ENCODE measurements at regions of chr5 and their contacts with region 1.

Region 1: GRCh38 chr5:151115274-151115905 is 34.6 kb upstream of the TNIP1 start:
- DNase-seq: peak; percentile 65 to 85
- ATAC-seq: peak; percentile 82 to 91
- H3K4me3 ChIP-seq: no peak overlapping the region
- H3K27ac ChIP-seq: no peak overlapping the region
- H3K4me1 ChIP-seq: no peaks in the 10 kb centered on the region
- CTCF ChIP-seq: peak; percentile 95
- EP300 ChIP-seq: no peak
- POLR2A ChIP-seq: no peak
- RAD21 ChIP-seq: peak; percentile 98 to 99

Region 2: GRCh38 chr5:150801117-150801927 is 314.1 kb before region 1 on chr5:
- CTCF ChIA-PET with region 1: interaction called, 19 read pairs
- POLR2A ChIA-PET with region 1: no interaction called
- DNase-seq: peak; percentile 59 to 71
- ATAC-seq: peak; percentile 89 to 97
- H3K4me3 ChIP-seq: peak overlapping the region; percentile 29
- H3K27ac ChIP-seq: peak overlapping the region; percentile 12 to 50; a peak in 2 of 6 replicates
- H3K4me1 ChIP-seq: no peaks in the 10 kb centered on the region
- CTCF ChIP-seq: peak; percentile 67
- EP300 ChIP-seq: no peak
- POLR2A ChIP-seq: no peak
- RAD21 ChIP-seq: peak; percentile 58 to 63; a peak in 4 of 5 replicates

Region 3: GRCh38 chr5:151030400-151030799 is 85.0 kb before region 1 on chr5:
- CTCF ChIA-PET with region 1: interaction called, 17 read pairs
- POLR2A ChIA-PET with region 1: no interaction called
- DNase-seq: no peak
- ATAC-seq: no peak
- H3K4me3 ChIP-seq: no peak overlapping the region
- H3K27ac ChIP-seq: no peak overlapping the region
- H3K4me1 ChIP-seq: no peaks in the 10 kb centered on the region
- CTCF ChIP-seq: no peak
- EP300 ChIP-seq: no peak
- POLR2A ChIP-seq: no peak
- RAD21 ChIP-seq: no peak

Region 4: DNA sequence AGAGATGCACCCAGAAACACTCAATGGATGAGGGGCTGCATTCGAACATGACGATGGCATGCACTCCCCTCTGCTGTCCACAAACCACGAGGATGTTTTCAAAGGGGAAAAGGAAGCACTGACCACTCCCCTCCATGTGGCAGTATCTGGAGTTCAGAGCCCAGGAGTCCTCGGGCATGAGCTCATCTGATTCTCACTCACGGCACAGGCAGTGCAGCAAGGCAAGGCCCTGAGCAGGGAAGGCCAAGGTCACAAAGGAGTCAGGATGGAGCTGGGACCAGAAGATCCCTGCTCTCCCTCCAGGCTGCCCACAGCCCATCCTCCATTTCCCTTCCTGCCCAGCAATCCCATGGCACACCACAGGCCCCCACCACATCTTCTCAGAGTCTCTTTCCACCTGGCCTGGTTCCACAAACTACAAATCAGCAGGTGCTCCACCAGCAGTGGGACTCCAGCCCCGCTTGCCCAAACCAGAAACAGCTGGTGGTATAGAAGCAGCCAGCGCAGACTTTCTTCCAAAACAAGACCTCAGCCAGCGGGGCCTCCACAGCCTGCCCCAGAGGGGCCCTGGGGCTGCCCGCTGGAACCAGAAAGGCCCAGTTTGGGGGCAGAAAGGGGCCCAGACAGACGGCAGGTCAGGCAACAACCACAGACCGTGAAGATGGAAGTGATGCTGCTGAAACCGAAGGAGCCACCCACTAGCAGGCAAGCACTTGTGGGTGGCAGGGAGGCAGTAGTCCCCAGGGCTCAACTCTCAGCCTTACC is 46.8 kb before region 1 on chr5:
- CTCF ChIA-PET with region 1: interaction called, 40 read pairs
- POLR2A ChIA-PET with region 1: no interaction called
- DNase-seq: no peak
- ATAC-seq: no peak
- H3K4me3 ChIP-seq: no peak overlapping the region
- H3K27ac ChIP-seq: peak overlapping the region; percentile 19 to 45; a peak in 3 of 6 replicates
- H3K4me1 ChIP-seq: peaks cover 60% of the 10 kb centered on the region
- CTCF ChIP-seq: no peak
- EP300 ChIP-seq: no peak
- POLR2A ChIP-seq: no peak
- RAD21 ChIP-seq: no peak

Region 5: GRCh38 chr5:151104795-151105194 is 10.6 kb before region 1 on chr5:
- CTCF ChIA-PET with region 1: interaction called, 53 read pairs
- POLR2A ChIA-PET with region 1: no interaction called
- DNase-seq: no peak
- ATAC-seq: no peak
- H3K4me3 ChIP-seq: no peak overlapping the region
- H3K27ac ChIP-seq: no peak overlapping the region
- H3K4me1 ChIP-seq: peaks cover 7% of the 10 kb centered on the region; the same call in 2 of the 3 replicates
- CTCF ChIP-seq: no peak
- EP300 ChIP-seq: no peak
- POLR2A ChIP-seq: no peak
- RAD21 ChIP-seq: no peak

Region 6: GRCh38 chr5:151239237-151239861 is 124.0 kb after region 1 on chr5:
- CTCF ChIA-PET with region 1: interaction called, 19 read pairs
- POLR2A ChIA-PET with region 1: no interaction called
- DNase-seq: peak; percentile 60 to 67
- ATAC-seq: peak; percentile 79 to 91
- H3K4me3 ChIP-seq: no peak overlapping the region
- H3K27ac ChIP-seq: no peak overlapping the region
- H3K4me1 ChIP-seq: 0 out of 3 replicates have a peak, but pooled peaks cover 3% of the 10 kb centered on the region
- CTCF ChIP-seq: peak; percentile 61
- EP300 ChIP-seq: no peak
- POLR2A ChIP-seq: no peak
- RAD21 ChIP-seq: peak; percentile 74 to 77

Measured in A549 (cell line).